Endothelial cell of umbilical vein (primary cell): ENCODE measurements at regions of chr2 and their contacts with region 1.

Region 1: GRCh38 chr2:230824406-230824978 is 40.2 kb upstream of the ITM2C start:
- DNase-seq: peak; percentile 71
- H3K4me3 ChIP-seq: no peak overlapping the region
- H3K27ac ChIP-seq: no peak overlapping the region
- H3K4me1 ChIP-seq: no peaks in the 10 kb centered on the region
- H3K27me3 ChIP-seq: peaks cover 6 to 20% of the 10 kb centered on the region in 2 experiments
- CTCF ChIP-seq: peak; percentile 59 to 60
- POLR2A ChIP-seq: no peak

Region 2: DNA sequence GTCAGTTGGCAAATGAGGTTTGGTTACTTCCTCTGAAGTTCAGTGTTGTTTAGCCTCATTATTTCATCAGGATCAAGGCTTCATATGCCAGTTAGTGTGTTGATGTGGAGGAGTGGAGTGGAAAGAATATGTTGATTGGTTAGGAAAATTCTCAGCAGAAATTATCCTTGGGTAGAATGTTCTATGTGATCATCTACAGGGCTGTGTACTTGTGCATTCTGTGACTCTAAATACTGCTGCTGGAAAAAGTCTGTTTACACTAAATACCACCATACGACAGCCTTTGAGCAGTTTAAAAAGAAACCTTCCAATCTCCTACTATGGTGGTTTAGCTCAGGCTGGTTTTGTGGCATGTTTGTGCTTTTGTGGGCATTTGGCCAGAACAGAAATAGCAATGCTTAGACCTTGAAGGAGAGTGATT is 86.1 kb before region 1 on chr2:
- CTCF ChIA-PET with region 1: no interaction called
- POLR2A ChIA-PET with region 1: no interaction called
- dilution Hi-C with region 1: no loop called
- intact Hi-C with region 1: no loop called
- DNase-seq: peak; percentile 40
- H3K4me3 ChIP-seq: no peak overlapping the region
- H3K27ac ChIP-seq: no peak overlapping the region
- H3K4me1 ChIP-seq: no peaks in the 10 kb centered on the region
- H3K27me3 ChIP-seq: no peaks in the 10 kb centered on the region
- CTCF ChIP-seq: no peak
- POLR2A ChIP-seq: no peak

Region 3: DNA sequence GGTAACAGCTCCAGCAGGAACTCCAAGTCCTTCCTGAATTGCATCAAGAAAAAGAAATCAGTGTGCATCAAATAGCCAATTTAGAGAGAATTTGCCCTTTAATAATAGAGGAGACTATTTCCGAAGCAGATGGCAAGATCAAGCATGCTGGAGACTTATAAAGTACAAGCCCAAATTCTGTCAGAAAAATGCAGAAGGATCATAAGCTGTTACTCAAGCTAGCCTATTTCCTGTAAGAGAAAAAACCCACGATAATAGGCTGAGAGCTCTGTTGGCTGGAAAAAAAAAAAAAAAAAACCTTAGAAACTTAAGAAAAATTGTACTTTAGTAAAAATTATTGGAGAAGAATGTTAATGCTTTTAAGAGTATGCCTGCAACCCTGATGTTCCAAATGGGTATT is 15.8 kb after region 1 on chr2:
- CTCF ChIA-PET with region 1: interaction called, 21 read pairs
- POLR2A ChIA-PET with region 1: no interaction called
- dilution Hi-C with region 1: no loop called
- intact Hi-C with region 1: no loop called
- DNase-seq: no peak
- H3K4me3 ChIP-seq: no peak overlapping the region
- H3K27ac ChIP-seq: no peak overlapping the region
- H3K4me1 ChIP-seq: no peaks in the 10 kb centered on the region
- H3K27me3 ChIP-seq: peaks cover 3 to 7% of the 10 kb centered on the region in 2 experiments
- CTCF ChIP-seq: no peak
- POLR2A ChIP-seq: no peak

Region 4: DNA sequence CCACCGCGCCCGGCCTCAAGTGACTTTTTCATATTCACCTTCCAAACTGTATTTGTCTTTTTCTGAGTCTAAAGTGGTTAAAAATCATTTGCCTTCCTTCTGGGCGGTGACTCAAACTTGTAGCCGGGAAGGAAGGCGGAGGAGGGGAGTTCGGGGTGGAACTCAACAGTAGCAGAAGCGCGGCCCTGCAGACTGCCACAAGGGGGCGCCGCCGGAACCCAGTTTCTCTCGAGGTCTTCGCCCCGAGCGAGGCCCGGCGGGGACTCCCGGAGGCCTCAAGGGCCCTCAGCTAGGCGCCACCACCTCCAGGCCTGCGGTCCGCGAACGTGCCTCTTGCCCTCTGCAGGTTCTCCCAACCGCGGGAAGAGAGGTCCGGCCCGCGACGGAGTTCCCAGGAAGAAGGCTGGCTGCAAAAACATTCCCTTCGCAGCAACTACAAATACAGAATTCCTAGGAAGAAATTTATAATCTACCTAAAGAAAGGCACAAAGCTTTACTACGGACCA is 23.4 kb after region 1 on chr2:
- CTCF ChIA-PET with region 1: interaction called, 63 read pairs
- POLR2A ChIA-PET with region 1: no interaction called
- dilution Hi-C with region 1: no loop called
- intact Hi-C with region 1: loop called (anchors 1 kb)
- DNase-seq: peak; percentile 78
- H3K4me3 ChIP-seq: no peak overlapping the region
- H3K27ac ChIP-seq: no peak overlapping the region
- H3K4me1 ChIP-seq: no peaks in the 10 kb centered on the region
- H3K27me3 ChIP-seq: peaks cover 7% of the 10 kb centered on the region in 2 experiments
- CTCF ChIP-seq: peak; percentile 96 to 97
- POLR2A ChIP-seq: no peak

Region 5: DNA sequence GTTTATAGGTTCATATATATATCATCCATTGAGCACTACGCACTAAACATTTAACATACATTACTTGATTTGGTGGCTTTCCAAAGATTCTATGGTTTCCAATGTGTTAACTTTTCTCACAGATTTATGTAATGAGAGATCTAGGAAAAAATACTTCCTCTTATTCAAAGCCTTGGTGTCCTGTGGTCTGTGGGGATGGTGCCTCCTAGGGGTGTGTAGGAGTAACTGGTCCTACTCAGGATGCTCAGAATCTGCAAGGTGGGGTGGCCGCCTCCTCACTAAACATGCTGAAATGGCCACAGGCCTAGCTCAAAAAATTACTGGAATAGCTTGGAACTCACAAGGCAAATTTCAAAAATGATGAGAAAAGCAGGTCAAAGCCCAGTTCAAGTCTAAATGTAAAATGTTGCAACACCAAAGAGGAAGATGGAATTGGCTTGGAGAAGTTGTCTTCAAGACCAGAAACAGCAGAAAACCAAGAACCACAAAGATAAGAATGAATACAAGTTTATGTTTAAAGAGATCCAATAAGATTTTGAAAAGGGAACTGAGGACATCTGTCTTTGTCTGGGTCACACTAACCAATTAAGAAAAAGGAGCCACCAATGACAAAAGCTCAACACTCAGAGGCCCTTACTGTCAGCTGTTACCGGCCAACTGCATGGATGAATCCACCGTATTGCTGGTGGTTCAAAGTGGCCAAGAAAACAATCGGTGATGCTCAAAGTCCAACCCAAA is 89.1 kb after region 1 on chr2:
- CTCF ChIA-PET with region 1: interaction called, 4 read pairs
- POLR2A ChIA-PET with region 1: no interaction called
- dilution Hi-C with region 1: no loop called
- intact Hi-C with region 1: loop called (anchors 5 kb)
- DNase-seq: no peak
- H3K4me3 ChIP-seq: no peak overlapping the region
- H3K27ac ChIP-seq: no peak overlapping the region
- H3K4me1 ChIP-seq: no peaks in the 10 kb centered on the region
- H3K27me3 ChIP-seq: peaks cover 2 to 5% of the 10 kb centered on the region in 2 experiments
- CTCF ChIP-seq: peak; percentile 10 to 25
- POLR2A ChIP-seq: no peak

Region 6: GRCh38 chr2:230987137-230988020 is 162.9 kb after region 1 on chr2:
- CTCF ChIA-PET with region 1: interaction called, 287 read pairs
- POLR2A ChIA-PET with region 1: no interaction called
- dilution Hi-C with region 1: no loop called
- intact Hi-C with region 1: loop called (anchors 1 kb)
- DNase-seq: peak; percentile 56
- H3K4me3 ChIP-seq: peak overlapping the region in 2 of 3 experiments; percentile 2 to 17
- H3K27ac ChIP-seq: no peak overlapping the region
- H3K4me1 ChIP-seq: peaks cover 4% of the 10 kb centered on the region
- H3K27me3 ChIP-seq: peaks cover 7 to 21% of the 10 kb centered on the region in 2 experiments
- CTCF ChIP-seq: peak; percentile 96 to 98
- POLR2A ChIP-seq: no peak

Region 7: GRCh38 chr2:231056453-231057424 is 232.2 kb after region 1 on chr2 and contains the start of gene PSMD1:
- CTCF ChIA-PET with region 1: interaction called, 54 read pairs
- POLR2A ChIA-PET with region 1: no interaction called
- dilution Hi-C with region 1: no loop called
- intact Hi-C with region 1: loop called (anchors 1 kb)
- DNase-seq: peak; percentile 95
- H3K4me3 ChIP-seq: peak within 1 kb of the TSS; percentile 98 to 99 (median 99)
- H3K27ac ChIP-seq: peak within 1 kb of the TSS; percentile 86
- H3K4me1 ChIP-seq: peaks cover 24% of the 10 kb centered on the region
- H3K27me3 ChIP-seq: peaks cover 0 to 3% of the 10 kb centered on the region in 2 experiments
- CTCF ChIP-seq: peak; percentile 97 to 98
- POLR2A ChIP-seq: peak; percentile 71
- total RNA-seq, gene PSMD1: 156 and 163 TPM in 2 replicates